ENCODE measurements at regions of chr11 and their contacts with region 1.

Region 1: DNA sequence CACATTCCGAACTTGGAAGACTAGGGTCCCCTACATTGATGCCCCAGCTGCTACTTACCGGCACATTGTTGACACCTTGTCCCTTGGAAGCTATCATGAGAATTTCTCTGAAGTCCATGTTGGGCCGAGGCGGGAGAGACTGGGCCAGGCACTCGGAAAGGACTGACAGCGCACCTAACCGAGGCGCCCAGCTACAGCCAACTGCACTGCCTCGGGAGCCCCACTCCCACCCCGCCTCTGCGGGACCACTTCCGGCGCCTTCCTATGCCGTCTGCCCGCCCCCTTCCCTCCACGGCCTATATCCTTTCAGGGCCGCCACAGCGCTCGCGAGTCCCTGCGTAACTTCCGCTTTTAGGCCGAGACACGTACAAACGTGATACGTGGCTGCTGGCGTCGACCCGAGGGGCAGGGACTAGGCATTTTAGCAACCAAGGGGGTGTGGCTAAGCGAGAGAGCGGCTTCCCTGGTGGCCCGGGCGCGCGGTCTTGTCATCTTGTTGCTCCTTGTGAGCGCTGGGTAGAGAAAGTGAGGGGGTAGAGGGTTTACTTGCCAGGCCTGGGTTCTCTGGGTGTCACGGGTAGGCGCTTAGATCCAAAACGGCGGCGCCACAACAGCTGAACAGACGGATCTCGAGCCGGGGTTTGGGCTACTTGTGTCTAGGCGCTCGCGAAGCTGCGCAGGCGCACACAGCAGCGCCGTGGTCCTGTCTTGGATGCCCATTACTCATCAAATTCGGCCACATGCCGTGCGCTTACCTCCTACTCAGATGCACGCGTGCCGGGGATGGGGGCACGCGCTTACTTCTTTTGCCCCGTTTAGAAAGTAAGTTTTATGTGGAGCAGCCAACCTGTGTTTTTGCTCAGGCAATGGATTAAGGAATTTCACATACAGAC is at the start of gene SPTY2D1:
- DNase-seq: peak; percentile 100
- ATAC-seq: peak; percentile 98
- H3K4me3 Mint-ChIP-seq: peak within 1 kb of the TSS; percentile 92
- H3K27ac Mint-ChIP-seq: peak within 1 kb of the TSS; percentile 98
- H3K4me1 Mint-ChIP-seq: peaks cover 21% of the 10 kb centered on the region
- H3K27me3 Mint-ChIP-seq: no peaks in the 10 kb centered on the region
- total RNA-seq, gene SPTY2D1: 25.7 to 26.0 TPM

Region 2: GRCh38 chr11:18395735-18396504 is 238.5 kb before region 1 on chr11:
- CTCF ChIA-PET with region 1: interaction called, 3 read pairs
- POLR2A ChIA-PET with region 1: interaction called, 12 read pairs
- DNase-seq: peak; percentile 97
- ATAC-seq: peak; percentile 66
- H3K4me3 Mint-ChIP-seq: peak overlapping the region; percentile 99
- H3K27ac Mint-ChIP-seq: peak overlapping the region; percentile 98
- H3K4me1 Mint-ChIP-seq: peaks cover 56% of the 10 kb centered on the region
- H3K27me3 Mint-ChIP-seq: no peaks in the 10 kb centered on the region

Region 3: DNA sequence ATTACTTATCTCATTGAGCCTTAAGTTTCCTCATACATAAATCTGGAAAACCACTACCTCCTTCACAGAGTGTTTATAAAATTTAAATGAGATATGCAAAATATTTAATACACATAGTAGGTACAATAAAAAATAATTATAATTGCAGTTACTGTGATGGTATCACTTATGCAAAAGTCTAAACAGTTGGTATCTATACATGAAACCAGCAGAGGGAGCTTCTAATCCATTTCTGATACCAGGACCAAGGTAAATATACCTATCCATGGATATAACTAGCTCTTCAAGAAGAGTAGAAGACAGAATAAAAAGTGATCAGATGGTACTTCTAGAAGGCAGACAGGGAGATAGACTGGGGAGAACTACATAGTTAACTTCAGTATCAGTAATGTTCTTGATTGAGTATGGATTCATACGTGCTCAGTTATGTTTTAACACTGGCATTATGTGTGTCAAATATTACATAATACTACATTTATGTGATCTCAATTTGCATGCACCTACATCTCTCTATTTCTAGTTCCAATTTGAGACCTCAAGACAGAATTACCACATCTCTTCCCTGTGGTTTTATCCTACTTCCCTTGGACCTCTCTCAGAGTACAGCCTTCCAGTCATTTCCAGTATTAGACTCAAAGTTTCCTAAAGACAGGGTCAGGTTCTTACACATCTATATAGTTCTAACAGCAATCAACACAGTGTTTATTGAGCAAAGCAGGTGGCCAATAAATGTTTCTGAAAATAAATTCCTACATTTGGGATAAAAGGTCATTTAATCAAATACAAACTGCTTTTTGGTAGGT is 94.0 kb before region 1 on chr11:
- CTCF ChIA-PET with region 1: interaction called, 15 read pairs
- POLR2A ChIA-PET with region 1: interaction called, 3 read pairs
- DNase-seq: no peak
- ATAC-seq: peak; percentile 81
- H3K4me3 Mint-ChIP-seq: no peak overlapping the region
- H3K27ac Mint-ChIP-seq: no peak overlapping the region
- H3K4me1 Mint-ChIP-seq: no peaks in the 10 kb centered on the region
- H3K27me3 Mint-ChIP-seq: no peaks in the 10 kb centered on the region

Region 4: GRCh38 chr11:18624161-18624560 is 10.2 kb before region 1 on chr11:
- CTCF ChIA-PET with region 1: interaction called, 8 read pairs
- POLR2A ChIA-PET with region 1: interaction called, 37 read pairs
- DNase-seq: no peak
- ATAC-seq: no peak
- H3K4me3 Mint-ChIP-seq: no peak overlapping the region
- H3K27ac Mint-ChIP-seq: no peak overlapping the region
- H3K4me1 Mint-ChIP-seq: peaks cover 23% of the 10 kb centered on the region
- H3K27me3 Mint-ChIP-seq: no peaks in the 10 kb centered on the region

Region 5: DNA sequence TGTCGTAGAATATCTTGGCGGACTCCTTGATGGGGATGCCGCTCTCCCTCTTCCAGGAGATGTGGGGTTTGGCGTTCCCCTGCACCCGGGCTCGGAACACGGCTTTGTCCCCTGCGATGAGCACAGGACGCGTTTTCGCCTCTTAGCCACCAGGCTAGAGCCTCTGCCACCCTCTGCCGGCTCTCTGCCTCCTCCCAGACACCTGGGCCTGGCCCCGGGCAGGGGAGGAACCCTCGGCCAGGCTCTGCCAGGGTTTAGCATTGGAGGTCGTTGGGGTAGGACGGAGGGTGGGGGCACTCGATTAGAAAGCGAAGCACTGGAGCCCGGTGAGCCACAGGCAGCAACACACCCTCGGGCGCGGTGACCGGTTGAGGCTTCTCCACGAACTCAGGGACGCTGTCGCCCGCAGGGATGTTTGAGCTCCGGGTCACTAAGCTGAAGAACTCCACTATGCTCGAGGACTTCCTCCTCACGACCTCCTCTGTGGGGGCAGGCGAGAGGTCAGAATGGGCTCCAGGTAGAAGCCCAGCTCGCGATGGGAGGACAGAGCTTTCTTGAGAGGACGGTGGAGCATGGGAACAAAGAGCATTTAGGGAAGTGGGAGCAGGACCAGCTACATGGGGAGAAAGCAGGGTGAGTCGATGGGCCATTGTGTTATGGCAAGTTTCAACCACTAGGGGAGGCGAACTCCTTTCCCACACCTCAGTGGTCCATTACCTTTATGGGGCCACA is 87.3 kb after region 1 on chr11:
- CTCF ChIA-PET with region 1: interaction called, 13 read pairs
- POLR2A ChIA-PET with region 1: no interaction called
- DNase-seq: peak; percentile 66
- ATAC-seq: peak; percentile 56
- H3K4me3 Mint-ChIP-seq: peak overlapping the region; percentile 79
- H3K27ac Mint-ChIP-seq: peak overlapping the region; percentile 18
- H3K4me1 Mint-ChIP-seq: peaks cover 12% of the 10 kb centered on the region
- H3K27me3 Mint-ChIP-seq: peaks cover 15% of the 10 kb centered on the region

Region 6: GRCh38 chr11:18844753-18845367 is 210.5 kb after region 1 on chr11:
- CTCF ChIA-PET with region 1: no interaction called
- POLR2A ChIA-PET with region 1: no interaction called
- DNase-seq: no peak
- ATAC-seq: peak; percentile 55
- H3K4me3 Mint-ChIP-seq: no peak overlapping the region
- H3K27ac Mint-ChIP-seq: no peak overlapping the region
- H3K4me1 Mint-ChIP-seq: no peaks in the 10 kb centered on the region
- H3K27me3 Mint-ChIP-seq: peaks cover 24% of the 10 kb centered on the region